ENCODE measurements at regions of chr7 and their contacts with region 1.

Region 1: DNA sequence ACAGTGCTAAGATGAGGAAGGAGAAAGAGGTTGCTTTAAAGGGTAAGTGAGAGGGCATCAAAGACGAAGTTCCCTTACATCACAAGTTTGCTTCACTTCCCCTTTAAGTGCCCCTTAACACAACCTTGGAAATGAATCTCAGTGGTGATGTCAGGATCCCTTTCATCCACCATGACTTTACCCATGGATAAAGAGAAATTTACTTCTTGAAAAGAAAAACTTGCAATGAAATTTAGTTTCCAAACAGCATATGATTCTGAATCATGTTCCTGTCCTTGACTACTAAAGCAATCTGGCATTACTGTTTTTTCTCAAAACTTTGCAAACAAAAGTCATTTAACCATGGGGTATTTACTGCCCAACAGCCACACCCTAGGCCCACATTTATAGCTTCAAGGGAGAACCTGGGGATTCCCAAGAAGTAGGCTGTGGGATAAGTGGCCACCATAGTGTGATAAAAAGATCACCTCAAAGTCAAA is 135.9 kb downstream of the ITGB8 start:
- DNase-seq: peak; percentile 92 to 99 (median 96)
- H3K4me3 ChIP-seq: no peak overlapping the region
- H3K4me3 Mint-ChIP-seq: no peak overlapping the region
- H3K27ac ChIP-seq: peak overlapping the region; percentile 74 to 96
- H3K27ac Mint-ChIP-seq: peak overlapping the region; percentile 92 to 96 (median 95)
- H3K4me1 ChIP-seq: peaks cover 52 to 61% of the 10 kb centered on the region in 2 donors
- H3K4me1 Mint-ChIP-seq: peaks cover 52% of the 10 kb centered on the region
- H3K27me3 ChIP-seq: no peaks in the 10 kb centered on the region
- H3K27me3 Mint-ChIP-seq: peaks cover 0 to 5% (median 2%) of the 10 kb centered on the region in 3 donors
- CTCF ChIP-seq: no peak

Region 2: GRCh38 chr7:20219446-20220292 is 246.9 kb before region 1 on chr7:
- intact Hi-C with region 1: loop called (anchors 5 to 10 kb)
- DNase-seq: peak; percentile 96 to 100 (median 98)
- H3K4me3 ChIP-seq: peak overlapping the region in 1 of 3 experiments; percentile 40
- H3K4me3 Mint-ChIP-seq: peak overlapping the region in 1 of 2 donors; percentile 59
- H3K27ac ChIP-seq: peak overlapping the region; percentile 88 to 99
- H3K27ac Mint-ChIP-seq: peak overlapping the region; percentile 87 to 97 (median 96)
- H3K4me1 ChIP-seq: peaks cover 33 to 43% of the 10 kb centered on the region in 2 donors
- H3K4me1 Mint-ChIP-seq: peaks cover 55% of the 10 kb centered on the region
- H3K27me3 ChIP-seq: no peaks in the 10 kb centered on the region
- H3K27me3 Mint-ChIP-seq: peaks cover 0 to 1% (median 0%) of the 10 kb centered on the region in 3 donors
- CTCF ChIP-seq: no peak

Region 3: GRCh38 chr7:20508109-20508508 is 41.5 kb after region 1 on chr7:
- intact Hi-C with region 1: loop called in 1 of 2 experiments (anchors 5 kb)
- DNase-seq: peak; percentile 75 to 93 (median 83)
- H3K4me3 ChIP-seq: peak overlapping the region in 2 of 3 experiments; percentile 25 to 50
- H3K4me3 Mint-ChIP-seq: peak overlapping the region; percentile 44 to 72
- H3K27ac ChIP-seq: peak overlapping the region in 1 of 2 donors; percentile 75
- H3K27ac Mint-ChIP-seq: peak overlapping the region; percentile 86 to 97 (median 91)
- H3K4me1 ChIP-seq: peaks cover 19 to 30% of the 10 kb centered on the region in 2 donors
- H3K4me1 Mint-ChIP-seq: peaks cover 23% of the 10 kb centered on the region
- H3K27me3 ChIP-seq: no peaks in the 10 kb centered on the region
- H3K27me3 Mint-ChIP-seq: no peaks in the 10 kb centered on the region
- CTCF ChIP-seq: peak; percentile 19